Left cardiac atrium (tissue), 4 donors: ENCODE measurements at regions of chr2 and their contacts with region 1.

Region 1: DNA sequence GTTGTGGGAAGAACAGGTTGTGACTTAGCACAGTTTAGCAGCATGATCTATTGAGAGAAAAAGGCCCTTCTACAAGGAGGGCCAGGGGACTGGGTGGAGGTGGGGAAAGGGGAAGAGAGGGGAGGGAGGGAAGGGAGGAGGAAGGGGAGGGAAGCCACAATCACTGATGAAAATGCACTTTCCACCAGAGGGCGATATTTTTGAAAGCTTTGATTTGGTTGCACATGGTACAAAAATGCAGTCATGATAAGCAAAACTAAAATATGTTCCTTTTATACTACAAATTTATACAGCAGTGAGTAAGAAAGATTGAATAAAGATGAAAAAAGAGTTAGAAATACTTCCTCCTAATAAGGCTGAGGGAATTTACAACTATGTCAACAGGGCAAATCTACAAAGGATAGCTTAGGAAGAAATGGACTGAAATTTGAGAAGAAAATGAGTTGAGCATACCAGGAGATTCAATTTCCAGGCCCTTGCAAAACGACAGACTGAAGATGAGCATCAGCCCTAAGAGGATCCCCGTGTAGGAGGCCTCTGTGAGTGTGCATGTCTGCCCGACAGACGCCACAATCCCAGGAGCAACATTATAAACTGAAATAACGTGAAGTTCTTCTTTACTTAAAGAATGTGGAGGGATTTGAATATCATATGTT is 17.2 kb downstream of the SH3YL1 start:
- DNase-seq: no peak
- ATAC-seq: no peak

Region 2: GRCh38 chr2:115303-115702 is 131.3 kb before region 1 on chr2:
- intact Hi-C with region 1: no loop called
- DNase-seq: no peak
- ATAC-seq: peak; percentile 41 to 60

Region 3: DNA sequence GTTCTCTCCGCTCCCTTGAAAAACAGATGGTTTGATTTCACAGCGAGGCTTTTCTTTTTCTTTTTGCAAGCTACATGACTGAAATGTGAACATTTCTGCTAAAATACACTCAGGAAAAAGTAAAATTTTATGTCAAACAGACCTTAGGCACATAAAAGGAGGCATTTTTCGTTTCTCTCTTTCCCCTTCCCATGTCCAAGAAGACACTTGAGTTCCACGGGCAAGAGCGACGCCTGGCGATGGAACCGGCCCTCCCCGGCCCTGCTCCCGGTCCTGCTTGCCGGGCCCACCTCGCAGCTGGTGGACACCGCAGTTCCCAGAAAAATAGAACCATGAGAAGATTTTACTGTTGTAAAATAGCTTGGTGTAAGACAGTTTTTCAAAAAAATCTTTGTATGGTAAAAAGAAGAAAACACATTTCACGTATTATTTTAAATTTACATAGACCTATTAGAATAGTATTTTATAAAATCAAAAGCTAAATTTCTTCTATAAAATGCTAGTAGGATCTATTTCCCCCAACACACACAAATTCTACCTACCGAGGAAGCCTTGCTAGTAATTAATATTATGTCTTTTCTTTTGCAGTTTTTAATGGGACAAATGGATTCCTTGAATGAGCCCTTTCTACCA is 43.6 kb after region 1 on chr2:
- intact Hi-C with region 1: loop called in 1 of 2 experiments (anchors 5 kb)
- DNase-seq: peak; percentile 72
- ATAC-seq: peak; percentile 80 to 83

Region 4: DNA sequence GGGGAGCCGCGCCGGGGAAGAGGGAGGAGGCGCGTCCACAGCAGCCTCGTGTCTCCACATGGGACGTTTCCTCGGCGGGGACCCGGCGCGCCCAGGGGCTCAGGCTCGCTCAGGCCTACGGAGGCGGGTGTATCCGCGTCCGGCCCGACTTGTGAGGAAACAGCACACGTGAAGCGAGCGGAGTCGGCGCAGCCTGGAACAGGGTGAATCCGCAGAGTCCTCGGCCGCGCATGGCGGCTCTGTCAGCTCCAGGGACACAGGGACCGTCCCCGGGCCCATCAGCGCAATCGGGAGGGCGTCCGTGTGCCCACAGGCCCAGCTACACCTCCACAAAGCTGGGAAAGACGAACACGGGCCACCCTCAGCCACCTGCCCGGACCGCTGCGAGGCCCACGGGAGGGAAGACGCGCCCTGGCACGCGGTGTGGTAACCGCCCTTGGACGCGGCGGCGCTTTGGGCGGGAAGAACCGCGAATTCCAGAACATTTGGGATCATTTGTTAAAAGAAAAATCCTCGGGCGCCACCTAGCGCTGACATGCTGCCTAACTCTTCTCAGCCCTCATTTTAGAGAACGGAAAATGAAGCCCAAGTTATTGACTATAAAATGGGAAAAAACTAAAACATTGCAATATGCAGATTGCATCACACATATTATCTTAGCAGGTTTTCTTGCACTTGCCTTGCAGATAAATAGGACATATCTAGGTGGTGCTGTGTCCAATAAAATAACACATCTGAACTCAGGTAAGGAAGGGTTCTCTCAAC is 390.2 kb after region 1 on chr2:
- intact Hi-C with region 1: loop called in 1 of 2 experiments (anchors 5 kb)
- DNase-seq: peak; percentile 78
- ATAC-seq: peak; percentile 70 to 86